Thyroid gland (tissue), 4 donors: ENCODE measurements at regions of chr1 and their contacts with region 1.

Region 1: DNA sequence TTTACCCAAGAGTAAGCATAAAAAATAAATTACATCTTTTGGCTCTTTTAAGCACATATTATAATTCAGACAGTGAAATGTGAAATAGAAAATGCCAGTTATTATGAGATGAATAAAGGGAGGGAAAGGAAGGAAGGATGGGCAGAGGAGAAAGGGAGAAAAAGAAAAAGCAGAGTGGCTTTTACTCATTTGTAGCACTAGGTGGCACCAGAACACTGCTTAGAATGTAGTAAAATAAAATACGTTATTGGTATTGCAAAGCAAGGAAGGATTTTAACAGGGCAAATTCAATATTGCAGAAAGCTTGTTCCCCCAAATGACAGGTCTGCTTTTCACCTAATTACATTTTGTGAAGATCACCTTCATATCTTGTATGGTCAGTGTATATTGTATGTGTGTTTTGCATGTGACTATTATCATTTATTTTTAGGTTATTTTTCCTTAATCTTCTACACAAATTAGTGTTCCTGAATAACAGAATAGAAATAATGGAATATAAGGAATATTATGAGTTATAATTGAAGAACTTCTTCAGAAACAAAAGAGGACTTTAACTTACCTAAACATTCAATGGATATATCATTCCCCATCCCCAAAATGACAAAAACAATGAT is 9.1 kb upstream of the PCNX2 start:
- DNase-seq: no peak
- H3K4me3 ChIP-seq: no peak overlapping the region
- H3K27ac ChIP-seq: no peak overlapping the region
- H3K4me1 ChIP-seq: no peaks in the 10 kb centered on the region
- H3K27me3 ChIP-seq: no peaks in the 10 kb centered on the region
- CTCF ChIP-seq: peak; percentile 57 to 87 (median 72)
- POLR2A ChIP-seq: no peak

Region 2: DNA sequence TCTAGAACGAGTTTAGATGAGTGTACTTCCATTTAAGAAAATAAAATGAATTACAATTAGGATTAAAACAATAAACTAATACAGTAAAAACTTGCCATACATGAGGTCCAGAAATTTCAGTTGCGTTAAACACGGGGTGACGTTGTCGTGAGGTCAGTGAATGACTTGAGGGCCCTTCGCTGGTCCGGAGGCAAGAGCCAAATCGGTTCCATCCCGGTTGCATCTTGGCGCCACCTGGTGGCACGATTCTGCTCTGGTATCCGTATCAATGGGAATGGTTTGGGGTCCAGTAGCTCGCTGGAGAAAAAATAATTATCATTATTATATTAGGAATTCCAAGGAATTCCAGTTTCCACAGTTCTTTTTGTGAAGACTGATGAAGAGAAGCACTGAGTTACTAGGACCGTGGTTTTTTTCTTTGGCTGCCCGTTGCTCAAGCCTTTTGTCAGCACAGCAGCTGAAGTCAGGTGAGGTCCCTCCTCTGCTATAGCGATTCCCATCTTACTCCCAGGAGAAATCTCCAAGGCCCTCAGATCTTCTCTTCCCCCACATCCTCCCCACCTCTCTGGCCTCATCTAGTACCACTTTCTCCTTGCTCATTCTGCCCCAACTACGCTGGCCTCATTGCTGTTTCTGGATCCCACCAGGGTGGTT is 761.3 kb after region 1 on chr1:
- intact Hi-C with region 1: loop called (anchors 10 kb)
- DNase-seq: peak; percentile 87 to 90
- H3K4me3 ChIP-seq: no peak overlapping the region
- H3K27ac ChIP-seq: no peak overlapping the region
- H3K4me1 ChIP-seq: no peaks in the 10 kb centered on the region
- H3K27me3 ChIP-seq: no peaks in the 10 kb centered on the region
- CTCF ChIP-seq: peak; percentile 32 to 81 (median 62)
- POLR2A ChIP-seq: no peak